GM18951 (cell line): ENCODE measurements at regions of chr19 and their contacts with region 1.

Region 1: GRCh38 chr19:32570081-32570785 is 10.8 kb upstream of the PDCD5 start:
- POLR2A ChIP-seq: no peak

Region 2: GRCh38 chr19:30682999-30683536 is 1887.2 kb before region 1 on chr19:
- in situ Hi-C with region 1: loop called (anchors 25 kb)
- POLR2A ChIP-seq: no peak

Region 3: GRCh38 chr19:32345261-32346207 is 224.7 kb before region 1 on chr19 and contains the start of gene ZNF507:
- in situ Hi-C with region 1: loop called (anchors 10 kb)
- POLR2A ChIP-seq: peak; percentile 55

Region 4: DNA sequence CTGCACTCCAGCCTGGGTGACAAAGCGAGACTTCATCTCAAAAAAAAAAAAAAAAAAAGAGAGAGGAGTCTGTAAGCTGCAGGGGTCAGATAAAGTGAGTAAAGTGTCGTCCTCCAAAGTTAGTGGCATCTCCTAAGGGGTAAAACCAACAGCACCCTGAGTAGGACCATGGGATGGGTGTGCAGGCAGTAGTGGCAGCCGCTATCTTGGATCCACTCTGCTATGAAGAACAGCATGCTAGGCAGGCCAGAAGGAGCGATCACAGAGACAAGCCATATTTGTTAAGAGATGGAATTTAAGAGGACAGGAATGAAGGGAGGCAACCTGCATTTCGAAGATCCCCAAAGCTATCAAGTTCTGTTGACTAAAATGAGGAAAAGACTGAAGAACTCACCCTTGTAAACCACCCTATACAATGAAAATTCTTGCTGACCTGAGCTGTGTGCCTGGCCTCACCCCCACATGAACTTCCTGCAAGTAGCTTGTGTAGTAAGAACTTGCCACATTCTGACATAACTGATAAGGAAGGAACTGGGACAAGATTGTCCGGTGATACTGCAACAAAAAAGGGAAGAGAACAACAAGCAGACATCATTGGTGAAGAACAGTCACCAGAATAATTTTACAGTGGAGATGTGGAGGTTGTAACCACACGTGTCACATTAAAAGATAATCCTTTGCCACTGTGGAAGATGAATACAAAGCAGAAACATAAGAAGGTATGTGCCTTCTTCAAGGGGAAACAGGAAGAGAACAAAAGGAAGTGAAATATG is 148.5 kb before region 1 on chr19:
- in situ Hi-C with region 1: no loop called
- POLR2A ChIP-seq: no peak

Region 5: DNA sequence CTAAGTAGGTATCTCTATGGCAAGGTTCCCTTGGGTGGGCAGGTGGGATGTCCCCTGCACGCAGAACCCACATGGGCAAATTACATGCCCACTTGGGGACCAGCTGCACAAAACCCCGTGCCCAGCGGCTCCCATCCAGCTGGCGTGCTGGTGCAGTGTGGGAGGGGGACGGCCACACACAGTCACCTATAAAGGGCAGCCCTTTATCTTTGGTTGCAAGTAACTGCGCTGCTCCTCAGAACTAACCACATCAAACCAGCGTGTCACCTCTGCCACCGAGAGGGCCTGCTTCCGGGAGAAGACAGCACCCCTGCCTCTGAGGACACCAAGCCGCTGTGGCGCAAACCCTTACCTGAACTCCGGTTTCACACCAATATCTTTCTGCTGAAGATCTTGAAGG is 72.5 kb after region 1 on chr19:
- in situ Hi-C with region 1: no loop called
- POLR2A ChIP-seq: no peak